Mammary epithelial cell (primary cell): ENCODE measurements at regions of chr1 and their contacts with region 1.

Region 1: DNA sequence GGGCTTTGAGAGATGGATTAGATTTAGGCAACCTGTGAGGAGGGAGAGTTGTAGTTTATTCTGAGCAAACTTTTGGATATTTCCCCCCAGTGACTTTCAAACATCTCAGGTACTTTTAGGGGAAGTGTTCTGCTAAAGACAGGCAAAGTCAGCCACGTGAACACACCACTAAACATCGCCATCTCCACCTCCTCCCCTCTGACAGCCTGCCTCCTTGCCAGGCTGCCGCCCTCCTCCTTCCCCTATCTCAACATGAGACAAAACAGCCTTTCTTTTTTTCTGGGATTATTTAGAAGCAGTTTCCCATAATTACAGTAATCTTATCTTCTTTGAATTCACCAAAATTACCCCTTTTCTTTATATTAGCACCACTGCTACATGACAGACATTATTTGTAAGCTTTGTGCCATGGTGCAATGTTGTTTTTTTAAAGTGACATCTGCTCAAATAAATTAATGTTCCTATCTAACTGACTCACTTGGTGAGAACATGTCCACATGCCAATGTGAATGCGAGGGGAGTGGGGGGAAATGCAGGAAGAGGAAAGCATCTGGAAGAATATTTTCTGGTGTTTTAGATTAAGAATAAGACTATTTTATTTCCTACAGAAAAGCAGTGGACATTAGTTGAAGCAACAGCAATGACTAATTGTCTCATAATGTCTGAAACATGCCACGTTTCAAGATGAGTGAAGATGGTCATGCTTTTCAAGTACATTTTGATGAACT is 147.8 kb upstream of the ATP1B1 start:
- DNase-seq: no peak
- H3K4me3 ChIP-seq: no peak overlapping the region
- H3K27ac ChIP-seq: no peak overlapping the region
- H3K4me1 ChIP-seq: peaks cover 9% of the 10 kb centered on the region
- H3K27me3 ChIP-seq: no peaks in the 10 kb centered on the region
- CTCF ChIP-seq: no peak

Region 2: GRCh38 chr1:168863772-168864171 is 95.0 kb before region 1 on chr1:
- CTCF ChIA-PET with region 1: no interaction called
- dilution Hi-C with region 1: loop called (anchors 5 kb)
- in situ Hi-C with region 1: no loop called
- intact Hi-C with region 1: no loop called
- DNase-seq: no peak
- H3K4me3 ChIP-seq: no peak overlapping the region
- H3K27ac ChIP-seq: no peak overlapping the region
- H3K4me1 ChIP-seq: no peaks in the 10 kb centered on the region
- H3K27me3 ChIP-seq: no peaks in the 10 kb centered on the region
- CTCF ChIP-seq: no peak

Region 3: DNA sequence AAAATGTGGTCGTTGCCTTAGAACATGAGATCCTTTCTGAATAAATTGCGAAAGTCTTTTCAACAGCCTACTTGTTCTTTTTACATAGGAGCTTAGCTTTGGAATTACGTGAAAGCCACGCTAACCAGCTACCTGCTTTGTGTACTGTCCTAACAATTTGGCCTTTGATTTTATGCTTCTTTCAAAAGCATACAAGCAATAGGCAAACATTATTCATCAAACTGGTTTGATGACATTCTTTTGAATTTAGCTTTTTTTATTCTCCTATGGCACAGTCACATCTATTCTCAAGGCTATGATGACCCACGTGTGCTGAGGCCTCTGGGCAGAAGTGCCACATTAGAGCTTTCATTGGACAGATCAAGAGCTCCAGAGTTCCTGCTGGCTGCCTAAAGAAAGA is 51.7 kb before region 1 on chr1:
- CTCF ChIA-PET with region 1: no interaction called
- dilution Hi-C with region 1: loop called (anchors 5 kb)
- in situ Hi-C with region 1: no loop called
- intact Hi-C with region 1: no loop called
- DNase-seq: peak; percentile 71
- H3K4me3 ChIP-seq: no peak overlapping the region
- H3K27ac ChIP-seq: no peak overlapping the region
- H3K4me1 ChIP-seq: peaks cover 16% of the 10 kb centered on the region
- H3K27me3 ChIP-seq: no peaks in the 10 kb centered on the region
- CTCF ChIP-seq: no peak

Region 4: DNA sequence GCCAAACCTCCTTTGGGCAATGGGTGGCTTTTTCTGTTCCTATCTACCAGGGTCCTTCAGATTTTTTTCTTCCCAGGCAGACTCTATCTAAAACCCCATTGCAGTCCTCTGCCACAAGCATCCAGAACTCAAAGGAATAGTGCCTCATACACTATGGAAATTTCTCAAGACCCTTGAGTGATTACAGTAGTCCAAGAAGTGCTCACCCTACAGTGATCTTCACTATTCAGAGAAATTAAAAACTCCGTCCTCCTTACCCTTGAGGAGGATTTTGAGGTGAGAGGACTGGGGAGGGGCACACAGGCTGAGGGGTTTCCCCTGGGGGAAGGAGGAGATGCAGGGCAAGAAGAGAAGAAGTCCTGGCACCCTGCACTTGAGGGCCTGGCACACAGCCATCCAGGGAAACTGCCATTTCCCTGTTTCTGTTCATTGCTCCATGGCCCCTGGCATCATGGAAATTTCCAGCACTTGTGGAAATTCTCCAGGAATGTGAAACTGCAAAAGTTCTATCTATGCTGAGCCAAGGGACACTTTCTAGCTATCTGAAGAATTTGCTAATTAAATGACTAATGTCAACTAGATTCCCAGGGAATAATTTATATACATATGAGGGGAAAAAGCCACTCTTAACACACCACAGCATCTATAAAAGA is 45.3 kb after region 1 on chr1:
- CTCF ChIA-PET with region 1: no interaction called
- dilution Hi-C with region 1: loop called (anchors 5 kb)
- in situ Hi-C with region 1: no loop called
- intact Hi-C with region 1: no loop called
- DNase-seq: no peak
- H3K4me3 ChIP-seq: no peak overlapping the region
- H3K27ac ChIP-seq: no peak overlapping the region
- H3K4me1 ChIP-seq: no peaks in the 10 kb centered on the region
- H3K27me3 ChIP-seq: no peaks in the 10 kb centered on the region
- CTCF ChIP-seq: no peak